Heart right ventricle (tissue), 16 donors: ENCODE measurements at regions of chr2 and their contacts with region 1.

Region 1: DNA sequence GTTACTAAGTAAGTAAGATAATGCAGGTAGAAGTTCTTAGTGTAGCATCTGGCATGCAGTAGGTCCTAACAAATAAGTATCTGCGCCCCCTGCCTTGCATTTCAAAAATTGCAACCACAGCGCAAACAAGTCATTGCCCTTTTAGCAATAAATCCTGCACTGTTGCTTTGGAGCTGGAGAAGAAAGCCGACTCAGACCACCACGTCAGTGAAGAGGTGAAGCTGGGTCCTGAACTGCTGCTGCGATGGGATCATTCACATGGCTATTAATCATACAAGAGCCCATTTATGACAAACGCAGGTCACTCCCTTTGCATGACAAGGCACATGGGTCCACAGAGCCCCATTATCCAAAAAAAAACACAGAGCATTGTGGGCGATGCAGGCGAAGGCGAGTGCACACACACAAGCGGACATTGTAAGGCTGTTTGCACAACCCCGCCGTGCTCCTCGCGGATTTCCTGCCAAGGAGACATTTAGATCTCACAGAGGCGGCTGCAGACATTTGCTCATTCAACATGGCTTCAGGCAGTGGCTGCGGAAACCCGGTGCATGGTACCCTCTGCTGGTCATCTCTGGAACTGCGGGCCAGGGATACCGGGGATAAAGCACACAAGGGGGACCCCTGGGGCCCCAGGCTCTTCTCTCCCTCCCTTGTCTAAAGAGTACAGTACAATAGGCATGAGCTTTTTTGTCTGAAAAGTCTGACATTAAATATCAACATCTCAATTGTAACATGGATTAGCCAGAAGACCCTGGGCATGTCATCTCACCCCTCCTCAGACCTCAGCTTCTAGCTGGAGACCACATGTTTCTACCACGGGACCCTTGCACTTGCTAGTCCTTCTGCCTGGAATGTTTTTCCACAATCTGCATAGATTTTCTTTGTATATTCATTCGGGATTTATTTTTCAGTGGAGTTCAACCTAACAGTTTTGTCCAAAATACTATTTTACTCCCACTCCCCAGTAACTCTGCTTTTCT is 56.7 kb downstream of the CYRIA start:
- DNase-seq: peak; percentile 86 to 88
- ATAC-seq: peak; percentile 83 to 92 (median 88)
- H3K4me3 ChIP-seq: peak overlapping the region in 9 of 10 donors; percentile 27 to 58 (median 48)
- H3K27ac ChIP-seq: peak overlapping the region in 5 of 10 donors; percentile 7 to 46 (median 33)
- H3K4me1 ChIP-seq: peaks cover 0 to 32% (median 17%) of the 10 kb centered on the region in 9 donors
- H3K27me3 ChIP-seq: no peaks in the 10 kb centered on the region
- CTCF ChIP-seq: peak; percentile 81 to 96 (median 92)

Region 2: GRCh38 chr2:16303273-16303577 is 305.7 kb before region 1 on chr2:
- intact Hi-C with region 1: loop called in 1 of 10 experiments (anchors 10 kb)
- DNase-seq: no peak
- ATAC-seq: no peak
- H3K4me3 ChIP-seq: peak overlapping the region in 1 of 10 donors; percentile 17
- H3K27ac ChIP-seq: no peak overlapping the region
- H3K4me1 ChIP-seq: no peaks in the 10 kb centered on the region
- H3K27me3 ChIP-seq: peaks cover 0 to 37% (median 19%) of the 10 kb centered on the region in 7 donors
- CTCF ChIP-seq: no peak

Region 3: DNA sequence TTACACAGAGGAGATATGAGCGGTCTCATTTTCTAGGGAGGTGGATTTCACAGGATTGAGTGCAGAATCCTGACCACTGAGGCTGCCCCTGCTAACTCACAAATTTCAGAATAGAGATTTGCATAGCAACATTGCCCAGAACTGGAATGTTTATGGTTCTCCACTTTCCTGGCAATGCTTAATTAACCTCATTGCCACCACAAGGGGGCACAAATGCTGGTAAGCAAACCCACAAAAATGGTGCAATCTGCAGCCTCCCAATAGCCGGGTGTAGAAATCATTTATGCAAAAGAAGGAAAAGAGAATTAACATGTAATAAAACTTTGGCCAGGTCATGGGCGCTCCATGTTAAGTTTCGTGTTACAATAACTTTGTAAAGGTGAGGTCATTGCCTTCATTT is 55.7 kb before region 1 on chr2:
- intact Hi-C with region 1: loop called in 9 of 10 experiments (anchors 1 to 5 kb)
- DNase-seq: peak in 1 of 2 donors; percentile 16
- ATAC-seq: peak in 2 of 8 donors; percentile 12 to 22
- H3K4me3 ChIP-seq: no peak overlapping the region
- H3K27ac ChIP-seq: no peak overlapping the region
- H3K4me1 ChIP-seq: no peaks in the 10 kb centered on the region
- H3K27me3 ChIP-seq: no peaks in the 10 kb centered on the region
- CTCF ChIP-seq: peak; percentile 23 to 68 (median 61)

Region 4: GRCh38 chr2:16559278-16560067 is 49.5 kb before region 1 on chr2:
- intact Hi-C with region 1: loop called in 6 of 10 experiments (anchors 5 kb)
- DNase-seq: no peak
- ATAC-seq: peak in 2 of 8 donors; percentile 25 to 37
- H3K4me3 ChIP-seq: no peak overlapping the region
- H3K27ac ChIP-seq: no peak overlapping the region
- H3K4me1 ChIP-seq: no peaks in the 10 kb centered on the region
- H3K27me3 ChIP-seq: no peaks in the 10 kb centered on the region
- CTCF ChIP-seq: no peak